ENCODE measurements at regions of chr4 and their contacts with region 1.

Region 1: GRCh38 chr4:142416711-142417275 is 429.3 kb downstream of the INPP4B start:
- DNase-seq: no peak
- ATAC-seq: peak; percentile 90
- H3K4me3 Mint-ChIP-seq: peak overlapping the region; percentile 32
- H3K27ac Mint-ChIP-seq: peak overlapping the region; percentile 89
- H3K4me1 Mint-ChIP-seq: peaks cover 36% of the 10 kb centered on the region
- H3K27me3 Mint-ChIP-seq: no peaks in the 10 kb centered on the region

Region 2: GRCh38 chr4:142405021-142405694 is 11.6 kb before region 1 on chr4:
- CTCF ChIA-PET with region 1: interaction called, 36 read pairs
- POLR2A ChIA-PET with region 1: interaction called, 106 read pairs
- DNase-seq: peak; percentile 74
- ATAC-seq: peak; percentile 66
- H3K4me3 Mint-ChIP-seq: peak overlapping the region; percentile 92
- H3K27ac Mint-ChIP-seq: peak overlapping the region; percentile 97
- H3K4me1 Mint-ChIP-seq: peaks cover 70% of the 10 kb centered on the region
- H3K27me3 Mint-ChIP-seq: no peaks in the 10 kb centered on the region

Measured in activated CD8-positive, alpha-beta T cell treated with anti-CD3 and anti-CD28 coated beads, Interleukin-2, amount 10 ng/mL, durations not matched to agents 7 days and 5 days (primary cell).